Dorsolateral prefrontal cortex (tissue), 120 donors: ENCODE measurements at regions of chr12 and their contacts with region 1.

Region 1: GRCh38 chr12:57693659-57694458 is at the start of gene OS9:
- DNase-seq: peak; percentile 86 to 99 (median 98)
- H3K4me3 ChIP-seq: peak within 1 kb of the TSS; percentile 57 to 100 (median 92)
- H3K27ac ChIP-seq: peak within 1 kb of the TSS in 54 of 59 donors; percentile 16 to 92 (median 74)
- H3K27me3 ChIP-seq: no peaks in the 10 kb centered on the region
- CTCF ChIP-seq: peak; percentile 47 to 93 (median 80)
- total RNA-seq, gene OS9: 111 to 171 (median 140) TPM

Region 2: GRCh38 chr12:57571926-57572762 is 121.7 kb before region 1 on chr12:
- intact Hi-C with region 1: no loop called
- DNase-seq: no peak
- H3K4me3 ChIP-seq: no peak overlapping the region
- H3K27ac ChIP-seq: peak overlapping the region in 2 of 59 donors; percentile 11 to 18
- H3K27me3 ChIP-seq: no peaks in the 10 kb centered on the region
- CTCF ChIP-seq: no peak

Region 3: DNA sequence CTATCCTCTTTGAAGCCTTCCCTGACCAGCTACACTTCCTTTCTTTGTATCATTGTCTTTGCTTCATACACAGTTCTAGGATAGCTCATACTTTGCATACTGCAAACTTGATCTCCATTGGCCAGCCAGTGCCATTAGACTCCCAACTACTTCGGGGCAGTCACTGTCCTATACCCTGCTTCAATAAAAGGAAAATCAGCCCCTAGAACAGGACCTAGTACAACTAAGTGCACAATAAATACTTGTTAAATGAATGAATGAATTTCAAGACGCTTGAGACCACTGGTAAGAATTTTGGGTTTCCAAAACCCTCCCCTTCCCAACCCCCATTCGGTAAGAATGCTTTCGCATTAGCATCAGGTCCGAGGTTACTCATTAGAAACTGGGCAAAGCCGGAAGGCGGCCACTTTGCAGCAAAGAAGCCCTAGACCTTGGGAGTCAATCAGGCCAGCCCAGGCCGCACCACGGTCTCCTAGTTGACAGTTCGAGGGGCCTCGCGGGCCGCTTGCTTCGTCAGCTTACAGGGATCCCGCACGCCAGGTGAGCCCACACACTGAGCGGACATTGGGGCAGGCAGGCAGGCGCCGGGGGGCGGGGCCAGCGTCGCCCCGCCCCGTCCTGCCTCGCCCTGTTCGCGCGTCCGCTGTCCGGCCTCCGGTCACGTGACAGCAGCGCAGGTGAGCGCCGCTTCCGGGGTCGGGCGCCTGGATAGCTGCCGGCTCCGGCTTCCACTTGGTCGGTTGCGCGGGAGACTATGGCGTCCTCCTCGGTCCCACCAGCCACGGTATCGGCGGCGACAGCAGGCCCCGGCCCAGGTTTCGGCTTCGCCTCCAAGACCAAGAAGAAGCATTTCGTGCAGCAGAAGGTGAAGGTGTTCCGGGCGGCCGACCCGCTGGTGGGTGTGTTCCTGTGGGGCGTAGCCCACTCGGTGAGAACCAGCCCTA is 103.1 kb before region 1 on chr12 and contains the start of gene PIP4K2C:
- intact Hi-C with region 1: loop called (anchors 1 to 5 kb)
- DNase-seq: peak; percentile 69 to 91 (median 80)
- H3K4me3 ChIP-seq: peak within 1 kb of the TSS; percentile 58 to 100 (median 93)
- H3K27ac ChIP-seq: peak within 1 kb of the TSS in 57 of 59 donors; percentile 7 to 92 (median 82)
- H3K27me3 ChIP-seq: no peaks in the 10 kb centered on the region
- CTCF ChIP-seq: peak in 16 of 56 donors; percentile 3 to 45 (median 24)
- total RNA-seq, gene PIP4K2C: 37.9 to 103 (median 73.9) TPM

Region 4: GRCh38 chr12:57632694-57633477 is 61.0 kb before region 1 on chr12 and contains the start of gene B4GALNT1:
- intact Hi-C with region 1: loop called in 1 of 2 experiments (anchors 5 kb)
- DNase-seq: peak in 6 of 10 donors; percentile 44 to 86 (median 70)
- H3K4me3 ChIP-seq: peak within 1 kb of the TSS; percentile 41 to 84 (median 71)
- H3K27ac ChIP-seq: peak within 1 kb of the TSS in 57 of 59 donors; percentile 34 to 92 (median 82)
- H3K27me3 ChIP-seq: peaks cover 0 to 10% (median 0%) of the 10 kb centered on the region in 45 donors
- CTCF ChIP-seq: peak; percentile 47 to 89 (median 76)
- total RNA-seq, gene B4GALNT1: 23.9 to 123 (median 85.1) TPM

Region 5: GRCh38 chr12:57661376-57661775 is 32.5 kb before region 1 on chr12:
- intact Hi-C with region 1: no loop called
- DNase-seq: no peak
- H3K4me3 ChIP-seq: no peak overlapping the region
- H3K27ac ChIP-seq: no peak overlapping the region
- H3K27me3 ChIP-seq: no peaks in the 10 kb centered on the region
- CTCF ChIP-seq: no peak